CD4-positive, alpha-beta memory T cell (primary cell): ENCODE measurements at regions of chr13 and their contacts with region 1.

Region 1: GRCh38 chr13:26186118-26186870 is 35.8 kb downstream of the RNF6 start:
- DNase-seq: peak; percentile 88 to 93 (median 91)
- H3K4me3 ChIP-seq: peak overlapping the region; percentile 80 to 82
- H3K4me3 Mint-ChIP-seq: peak overlapping the region; percentile 89 to 99 (median 94)
- H3K27ac ChIP-seq: peak overlapping the region; percentile 60
- H3K27ac Mint-ChIP-seq: peak overlapping the region; percentile 91 to 98 (median 96)
- H3K4me1 ChIP-seq: peaks cover 18% of the 10 kb centered on the region
- H3K4me1 Mint-ChIP-seq: peaks cover 12 to 33% (median 27%) of the 10 kb centered on the region in 4 donors
- H3K27me3 ChIP-seq: no peaks in the 10 kb centered on the region
- H3K27me3 Mint-ChIP-seq: no peaks in the 10 kb centered on the region

Region 2: DNA sequence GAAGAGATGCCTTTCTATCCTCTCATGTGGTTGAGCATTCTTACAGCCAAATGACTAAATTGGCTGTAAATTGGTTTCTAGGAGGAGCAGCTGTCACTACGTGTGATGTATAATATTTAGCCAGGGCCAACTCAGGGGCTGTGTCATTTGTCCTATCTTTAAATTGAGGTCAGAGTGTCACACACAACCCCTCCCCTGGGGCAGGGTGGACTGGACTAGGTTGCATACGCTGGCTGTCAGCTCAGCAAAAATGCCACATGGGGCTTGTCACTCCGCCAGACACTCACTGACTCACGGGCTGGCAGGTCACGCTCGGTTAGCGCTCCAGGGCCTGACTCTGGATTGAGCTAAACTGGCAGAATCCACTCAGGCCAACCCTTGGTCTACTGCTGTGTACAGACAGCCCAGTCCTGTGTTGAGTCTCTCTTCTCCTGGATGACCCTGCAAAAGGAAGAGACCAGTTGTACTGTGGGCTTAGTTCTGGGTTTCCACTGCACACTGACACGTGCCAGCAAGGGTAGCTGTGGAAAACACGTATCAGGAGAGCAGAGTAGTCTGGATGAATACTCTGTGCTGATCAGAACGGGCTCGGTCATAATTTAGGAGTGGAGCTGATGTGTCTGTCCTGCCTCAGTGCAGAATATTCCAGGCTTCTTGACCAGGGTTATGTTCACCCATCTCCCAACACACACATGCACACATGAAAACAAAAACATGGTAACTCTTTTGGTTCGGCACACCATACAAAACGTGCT is 163.6 kb before region 1 on chr13:
- CTCF ChIA-PET with region 1: no interaction called
- POLR2A ChIA-PET with region 1: no interaction called
- intact Hi-C with region 1: no loop called
- DNase-seq: no peak
- H3K4me3 ChIP-seq: no peak overlapping the region
- H3K4me3 Mint-ChIP-seq: no peak overlapping the region
- H3K27ac ChIP-seq: no peak overlapping the region
- H3K27ac Mint-ChIP-seq: peak overlapping the region in 1 of 7 donors; percentile 16
- H3K4me1 ChIP-seq: no peaks in the 10 kb centered on the region
- H3K4me1 Mint-ChIP-seq: peaks cover 0 to 7% (median 5%) of the 10 kb centered on the region in 4 donors
- H3K27me3 ChIP-seq: no peaks in the 10 kb centered on the region
- H3K27me3 Mint-ChIP-seq: peaks cover 0 to 2% of the 10 kb centered on the region in 2 donors

Region 3: GRCh38 chr13:26216042-26216441 is 29.7 kb after region 1 on chr13:
- CTCF ChIA-PET with region 1: interaction called, 27 read pairs
- POLR2A ChIA-PET with region 1: interaction called, 63 read pairs
- intact Hi-C with region 1: loop called (anchors 1 kb)
- DNase-seq: no peak
- H3K4me3 ChIP-seq: no peak overlapping the region
- H3K4me3 Mint-ChIP-seq: no peak overlapping the region
- H3K27ac ChIP-seq: no peak overlapping the region
- H3K27ac Mint-ChIP-seq: no peak overlapping the region
- H3K4me1 ChIP-seq: peaks cover 19% of the 10 kb centered on the region
- H3K4me1 Mint-ChIP-seq: peaks cover 23 to 43% (median 32%) of the 10 kb centered on the region in 4 donors
- H3K27me3 ChIP-seq: no peaks in the 10 kb centered on the region
- H3K27me3 Mint-ChIP-seq: no peaks in the 10 kb centered on the region

Region 4: GRCh38 chr13:26253787-26254582 is 67.7 kb after region 1 on chr13 and contains the start of gene CDK8:
- CTCF ChIA-PET with region 1: interaction called, 29 read pairs
- POLR2A ChIA-PET with region 1: interaction called, 5 read pairs
- intact Hi-C with region 1: loop called (anchors 1 kb)
- DNase-seq: peak; percentile 91 to 95 (median 92)
- H3K4me3 ChIP-seq: peak within 1 kb of the TSS; percentile 55 to 87
- H3K4me3 Mint-ChIP-seq: peak within 1 kb of the TSS; percentile 91 to 100 (median 94)
- H3K27ac ChIP-seq: peak within 1 kb of the TSS; percentile 58
- H3K27ac Mint-ChIP-seq: peak within 1 kb of the TSS; percentile 86 to 99 (median 93)
- H3K4me1 ChIP-seq: peaks cover 18% of the 10 kb centered on the region
- H3K4me1 Mint-ChIP-seq: peaks cover 29 to 44% (median 30%) of the 10 kb centered on the region in 4 donors
- H3K27me3 ChIP-seq: no peaks in the 10 kb centered on the region
- H3K27me3 Mint-ChIP-seq: peaks cover 0 to 1% of the 10 kb centered on the region in 2 donors
- total RNA-seq, gene CDK8: 10.4 to 11.7 TPM

Region 5: GRCh38 chr13:26488236-26489003 is 302.1 kb after region 1 on chr13:
- CTCF ChIA-PET with region 1: interaction called, 282 read pairs
- POLR2A ChIA-PET with region 1: no interaction called
- intact Hi-C with region 1: no loop called
- DNase-seq: no peak
- H3K4me3 ChIP-seq: no peak overlapping the region
- H3K4me3 Mint-ChIP-seq: no peak overlapping the region
- H3K27ac ChIP-seq: no peak overlapping the region
- H3K27ac Mint-ChIP-seq: no peak overlapping the region
- H3K4me1 ChIP-seq: peaks cover 11% of the 10 kb centered on the region
- H3K4me1 Mint-ChIP-seq: peaks cover 0 to 12% (median 2%) of the 10 kb centered on the region in 4 donors
- H3K27me3 ChIP-seq: no peaks in the 10 kb centered on the region
- H3K27me3 Mint-ChIP-seq: peaks cover 10 to 19% of the 10 kb centered on the region in 2 donors

Region 6: DNA sequence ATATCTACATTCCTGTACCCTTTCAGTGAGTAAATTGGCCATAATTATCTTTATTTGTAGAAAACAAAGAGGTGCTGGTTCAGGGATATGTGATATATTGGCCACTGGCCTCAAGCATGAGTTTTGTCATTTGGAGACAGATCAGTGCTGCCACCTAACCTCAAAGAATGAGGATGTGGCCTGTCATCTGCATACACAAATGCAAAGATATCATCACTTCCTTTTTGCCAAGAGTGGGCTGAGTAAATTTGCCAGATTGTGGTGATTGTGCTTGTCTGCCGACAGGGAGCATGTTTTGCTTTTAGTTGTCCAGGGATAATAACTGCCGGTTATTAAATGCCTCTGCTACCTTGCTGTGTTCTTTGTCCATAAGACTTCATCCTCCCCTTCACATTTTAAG is 415.4 kb after region 1 on chr13:
- CTCF ChIA-PET with region 1: interaction called, 6 read pairs
- POLR2A ChIA-PET with region 1: no interaction called
- intact Hi-C with region 1: loop called (anchors 10 kb)
- DNase-seq: no peak
- H3K4me3 ChIP-seq: no peak overlapping the region
- H3K4me3 Mint-ChIP-seq: no peak overlapping the region
- H3K27ac ChIP-seq: no peak overlapping the region
- H3K27ac Mint-ChIP-seq: no peak overlapping the region
- H3K4me1 ChIP-seq: no peaks in the 10 kb centered on the region
- H3K4me1 Mint-ChIP-seq: peaks cover 0 to 1% (median 0%) of the 10 kb centered on the region in 4 donors
- H3K27me3 ChIP-seq: no peaks in the 10 kb centered on the region
- H3K27me3 Mint-ChIP-seq: peaks cover 5 to 14% of the 10 kb centered on the region in 2 donors

Region 7: DNA sequence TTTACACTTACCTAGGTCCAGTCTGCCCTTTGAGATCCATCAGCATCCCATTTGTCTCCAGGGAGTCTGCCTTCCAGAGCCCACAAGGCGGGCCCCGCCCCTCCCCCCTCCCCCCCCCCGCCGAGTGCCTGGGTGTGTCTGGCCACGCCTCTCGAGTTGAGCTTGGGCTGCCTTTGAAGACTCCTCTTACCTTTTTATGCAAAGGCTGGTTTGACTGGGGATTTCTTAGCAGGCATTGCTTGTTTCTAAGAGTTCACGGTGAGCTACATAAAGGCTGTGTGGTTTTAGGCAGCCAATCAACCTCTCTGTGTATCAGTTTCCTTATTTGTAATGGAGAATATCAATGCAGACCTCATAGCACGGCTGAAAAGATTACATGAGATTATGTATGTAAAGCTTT is 563.0 kb after region 1 on chr13:
- CTCF ChIA-PET with region 1: no interaction called
- POLR2A ChIA-PET with region 1: no interaction called
- intact Hi-C with region 1: no loop called
- DNase-seq: no peak
- H3K4me3 ChIP-seq: no peak overlapping the region
- H3K4me3 Mint-ChIP-seq: no peak overlapping the region
- H3K27ac ChIP-seq: no peak overlapping the region
- H3K27ac Mint-ChIP-seq: no peak overlapping the region
- H3K4me1 ChIP-seq: no peaks in the 10 kb centered on the region
- H3K4me1 Mint-ChIP-seq: peaks cover 0 to 5% (median 3%) of the 10 kb centered on the region in 4 donors
- H3K27me3 ChIP-seq: no peaks in the 10 kb centered on the region
- H3K27me3 Mint-ChIP-seq: peaks cover 17 to 22% of the 10 kb centered on the region in 2 donors

Region 8: DNA sequence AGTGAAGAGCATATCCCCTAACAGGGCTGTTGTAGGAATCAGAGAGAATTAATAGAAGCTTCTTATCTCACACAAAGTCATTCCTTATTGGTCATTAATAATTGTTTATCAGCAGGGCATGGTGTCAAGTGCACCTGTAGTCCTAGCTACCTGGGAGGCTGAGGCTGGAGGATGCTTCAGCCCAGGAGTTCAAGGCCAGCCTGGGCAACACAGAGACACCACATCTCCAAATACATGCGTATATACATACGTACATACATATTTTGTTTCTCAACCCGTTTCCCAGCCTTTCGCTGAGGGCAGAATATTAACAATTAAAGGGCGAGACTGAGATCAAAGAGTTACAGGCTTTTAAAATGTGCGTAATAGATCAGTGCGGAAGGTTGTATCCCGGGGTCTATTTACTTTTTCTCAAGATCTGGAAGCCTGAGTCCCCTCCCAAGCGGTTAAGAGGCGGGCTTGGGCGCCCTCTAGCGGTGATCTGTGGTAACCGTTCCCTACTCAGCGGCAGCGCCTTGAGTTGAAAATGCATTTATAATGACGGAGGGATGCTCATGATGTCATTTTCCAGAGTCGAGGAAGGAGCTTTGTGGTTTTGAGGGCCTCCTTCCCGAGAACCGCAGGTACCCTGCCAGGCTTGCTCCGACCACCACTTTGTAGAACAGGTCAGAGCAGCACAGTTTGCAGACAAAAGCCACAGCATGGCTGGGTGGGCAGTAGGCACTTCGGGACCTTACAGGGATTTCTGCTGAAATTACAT is 743.9 kb after region 1 on chr13:
- CTCF ChIA-PET with region 1: interaction called, 6 read pairs
- POLR2A ChIA-PET with region 1: no interaction called
- intact Hi-C with region 1: loop called (anchors 1 kb)
- DNase-seq: peak in 4 of 5 donors; percentile 48 to 57 (median 52)
- H3K4me3 ChIP-seq: no peak overlapping the region
- H3K4me3 Mint-ChIP-seq: no peak overlapping the region
- H3K27ac ChIP-seq: no peak overlapping the region
- H3K27ac Mint-ChIP-seq: no peak overlapping the region
- H3K4me1 ChIP-seq: no peaks in the 10 kb centered on the region
- H3K4me1 Mint-ChIP-seq: peaks cover 0 to 3% (median 0%) of the 10 kb centered on the region in 4 donors
- H3K27me3 ChIP-seq: no peaks in the 10 kb centered on the region
- H3K27me3 Mint-ChIP-seq: peaks cover 4% of the 10 kb centered on the region in 2 donors